SK-N-SH (cell line): ENCODE measurements at regions of chr2 and their contacts with region 1.

Region 1: GRCh38 chr2:174688079-174688478 is 76.2 kb downstream of the CHRNA1 start:
- DNase-seq: no peak
- H3K4me3 ChIP-seq: no peak overlapping the region
- H3K27ac ChIP-seq: no peak overlapping the region; a peak in 1 of 4 replicates
- H3K4me1 ChIP-seq: peaks cover 0 to 15% of the 10 kb centered on the region in 2 experiments; a peak in 2 of 4 replicates
- H3K27me3 ChIP-seq: no peaks in the 10 kb centered on the region
- CTCF ChIP-seq: peak; percentile 77
- EP300 ChIP-seq: no peak
- RAD21 ChIP-seq: peak; percentile 66

Region 2: GRCh38 chr2:174593574-174594203 is 94.4 kb before region 1 on chr2:
- CTCF ChIA-PET with region 1: interaction called, 22 read pairs
- POLR2A ChIA-PET with region 1: no interaction called
- DNase-seq: no peak
- H3K4me3 ChIP-seq: peak overlapping the region in 1 of 2 experiments; percentile 17; a peak in 1 of 4 replicates
- H3K27ac ChIP-seq: peak overlapping the region; percentile 96 to 98
- H3K4me1 ChIP-seq: peaks cover 53 to 63% of the 10 kb centered on the region in 2 experiments
- H3K27me3 ChIP-seq: no peaks in the 10 kb centered on the region
- CTCF ChIP-seq: no peak
- EP300 ChIP-seq: peak; percentile 20 to 62; a peak in 2 of 4 replicates
- RAD21 ChIP-seq: no peak

Region 3: GRCh38 chr2:174603280-174603679 is 84.8 kb before region 1 on chr2:
- CTCF ChIA-PET with region 1: interaction called, 23 read pairs
- POLR2A ChIA-PET with region 1: no interaction called
- DNase-seq: peak; percentile 36
- H3K4me3 ChIP-seq: no peak overlapping the region
- H3K27ac ChIP-seq: peak overlapping the region in 1 of 2 experiments; percentile 83; a peak in 2 of 4 replicates
- H3K4me1 ChIP-seq: peaks cover 12 to 44% of the 10 kb centered on the region in 2 experiments
- H3K27me3 ChIP-seq: no peaks in the 10 kb centered on the region
- CTCF ChIP-seq: peak; percentile 55
- EP300 ChIP-seq: no peak
- RAD21 ChIP-seq: peak; percentile 67

Region 4: DNA sequence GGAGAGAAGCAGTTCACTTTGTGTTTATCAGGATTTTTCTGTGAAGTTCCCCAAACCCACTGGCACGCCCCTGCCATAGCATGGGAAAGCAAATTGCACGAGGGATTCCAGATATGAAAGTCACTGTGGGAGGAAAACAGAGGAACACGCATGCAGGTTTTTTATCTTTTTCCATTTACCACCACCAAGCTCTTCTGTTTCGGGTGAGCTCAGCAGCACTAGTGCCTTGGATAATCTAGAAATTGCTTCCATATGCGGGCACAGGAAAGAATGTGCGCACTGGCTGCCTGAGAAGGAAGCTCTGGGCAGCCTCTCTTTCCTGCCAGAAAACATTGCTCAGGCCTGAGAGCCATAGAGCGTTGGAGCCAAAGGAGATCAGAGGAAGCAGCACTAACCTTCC is 24.5 kb before region 1 on chr2:
- CTCF ChIA-PET with region 1: interaction called, 14 read pairs
- POLR2A ChIA-PET with region 1: interaction called, 13 read pairs
- DNase-seq: peak; percentile 68
- H3K4me3 ChIP-seq: no peak overlapping the region
- H3K27ac ChIP-seq: peak overlapping the region; percentile 91 to 99
- H3K4me1 ChIP-seq: peaks cover 34 to 69% of the 10 kb centered on the region in 2 experiments
- H3K27me3 ChIP-seq: no peaks in the 10 kb centered on the region
- CTCF ChIP-seq: no peak
- EP300 ChIP-seq: peak; percentile 35 to 68; a peak in 2 of 4 replicates
- RAD21 ChIP-seq: no peak; the same call in 1 of the 2 replicates